T-cell (primary cell): ENCODE measurements at regions of chr1 and their contacts with region 1.

Region 1: GRCh38 chr1:206912445-206913095 is 9.2 kb downstream of the FCMR start:
- DNase-seq: peak in 33 of 35 experiments; percentile 21 to 86 (median 50)
- ATAC-seq: peak; percentile 31 to 35 (median 34)
- H3K4me3 ChIP-seq: no peak overlapping the region
- H3K4me3 Mint-ChIP-seq: peak overlapping the region in 1 of 3 donors; percentile 48
- H3K27ac ChIP-seq: peak overlapping the region; percentile 29
- H3K27ac Mint-ChIP-seq: peak overlapping the region in 1 of 2 donors; percentile 95
- H3K4me1 ChIP-seq: peaks cover 71 to 93% of the 10 kb centered on the region in 2 experiments
- H3K4me1 Mint-ChIP-seq: peaks cover 93 to 94% (median 93%) of the 10 kb centered on the region in 3 donors
- H3K27me3 ChIP-seq: no peaks in the 10 kb centered on the region
- H3K27me3 Mint-ChIP-seq: no peaks in the 10 kb centered on the region

Region 2: GRCh38 chr1:206143537-206144172 is 768.9 kb before region 1 on chr1:
- CTCF ChIA-PET with region 1: no interaction called
- POLR2A ChIA-PET with region 1: no interaction called
- DNase-seq: no peak
- ATAC-seq: no peak
- H3K4me3 ChIP-seq: no peak overlapping the region
- H3K4me3 Mint-ChIP-seq: no peak overlapping the region
- H3K27ac ChIP-seq: no peak overlapping the region
- H3K27ac Mint-ChIP-seq: no peak overlapping the region
- H3K4me1 ChIP-seq: peaks cover 0 to 5% of the 10 kb centered on the region in 2 experiments
- H3K4me1 Mint-ChIP-seq: peaks cover 0 to 4% (median 0%) of the 10 kb centered on the region in 3 donors
- H3K27me3 ChIP-seq: peaks cover 0 to 11% of the 10 kb centered on the region in 2 experiments
- H3K27me3 Mint-ChIP-seq: peaks cover 16 to 35% of the 10 kb centered on the region in 2 donors

Region 3: DNA sequence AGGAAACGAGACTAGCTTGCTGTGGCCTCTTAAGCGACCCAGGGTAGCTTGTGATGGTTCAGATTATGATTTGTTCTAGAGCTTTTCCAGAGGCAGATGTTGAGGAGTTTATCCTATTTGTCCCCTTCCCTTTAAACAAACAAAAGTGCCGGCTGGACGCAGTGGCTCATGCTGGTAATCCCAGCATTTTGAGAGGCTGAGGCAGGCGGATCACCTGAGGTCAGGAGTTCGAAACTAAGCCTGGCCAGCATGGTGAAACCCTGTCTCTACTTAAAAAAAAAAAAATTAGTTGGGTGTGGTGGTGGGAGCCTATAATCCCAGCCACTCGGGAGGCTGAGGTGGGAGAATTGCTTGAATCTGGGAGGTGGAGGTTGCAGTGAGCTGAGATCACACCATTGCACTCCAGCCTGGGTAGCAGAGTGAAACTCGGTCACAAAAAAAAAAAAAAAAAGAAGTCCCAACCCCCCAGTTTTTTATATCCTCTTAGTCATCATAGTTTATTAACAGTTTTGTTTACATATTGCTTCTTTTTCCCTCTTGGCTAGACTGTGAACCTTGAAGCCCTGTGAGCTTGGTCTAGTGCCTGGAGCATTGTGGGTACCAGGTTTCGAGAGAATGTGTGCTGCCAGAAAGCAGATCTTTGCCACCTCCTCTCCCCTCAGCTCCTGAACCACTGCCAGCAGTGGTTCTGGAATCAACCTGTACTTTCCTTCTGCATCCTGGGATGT is 198.1 kb before region 1 on chr1:
- CTCF ChIA-PET with region 1: interaction called in 1 of 2 experiments, 12 read pairs
- POLR2A ChIA-PET with region 1: no interaction called
- DNase-seq: peak in 11 of 35 experiments; percentile 14 to 68 (median 30)
- ATAC-seq: peak in 3 of 4 experiments; percentile 29 to 35 (median 31)
- H3K4me3 ChIP-seq: no peak overlapping the region
- H3K4me3 Mint-ChIP-seq: peak overlapping the region; percentile 22 to 71 (median 22)
- H3K27ac ChIP-seq: peak overlapping the region; percentile 71
- H3K27ac Mint-ChIP-seq: peak overlapping the region; percentile 86 to 98
- H3K4me1 ChIP-seq: peaks cover 36 to 66% of the 10 kb centered on the region in 2 experiments
- H3K4me1 Mint-ChIP-seq: peaks cover 83 to 87% (median 85%) of the 10 kb centered on the region in 3 donors
- H3K27me3 ChIP-seq: no peaks in the 10 kb centered on the region
- H3K27me3 Mint-ChIP-seq: no peaks in the 10 kb centered on the region

Region 4: DNA sequence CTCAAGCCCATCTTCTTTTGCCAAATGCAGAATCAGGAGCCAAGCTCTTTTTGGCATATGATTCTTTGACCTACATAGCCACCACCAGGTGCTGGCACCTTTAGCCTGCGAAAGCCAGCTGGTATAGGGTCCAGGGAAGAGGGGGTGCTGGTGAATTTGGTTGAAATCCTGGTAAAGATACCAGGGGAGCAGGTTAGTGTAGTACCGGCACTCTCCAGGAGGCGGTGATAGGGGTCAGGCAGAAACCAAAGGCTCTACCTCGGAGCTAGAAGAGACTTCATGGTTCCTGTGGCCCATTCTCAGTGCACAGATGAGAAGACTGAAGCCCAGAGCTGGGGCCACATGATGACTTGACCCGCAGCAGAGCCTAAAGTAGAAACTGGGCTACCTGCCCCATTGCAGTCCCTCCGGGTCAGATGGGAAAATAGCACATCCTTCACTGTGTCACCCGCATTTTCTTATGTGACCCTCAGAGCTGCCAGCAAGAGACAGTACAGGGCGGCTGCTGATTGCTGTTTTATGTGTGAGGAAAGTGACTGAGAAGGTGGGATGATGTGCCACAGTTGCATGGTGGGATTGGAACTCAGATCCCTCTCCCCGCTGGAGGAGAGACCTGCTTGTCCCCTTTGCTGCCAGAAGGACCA is 177.9 kb before region 1 on chr1:
- CTCF ChIA-PET with region 1: interaction called, 20 to 81 read pairs
- POLR2A ChIA-PET with region 1: interaction called in 1 of 2 experiments, 5 read pairs
- DNase-seq: peak; percentile 46 to 89 (median 75)
- ATAC-seq: peak; percentile 60 to 78 (median 69)
- H3K4me3 ChIP-seq: no peak overlapping the region
- H3K4me3 Mint-ChIP-seq: peak overlapping the region in 1 of 3 donors; percentile 21
- H3K27ac ChIP-seq: peak overlapping the region; percentile 89
- H3K27ac Mint-ChIP-seq: peak overlapping the region; percentile 66 to 91
- H3K4me1 ChIP-seq: peaks cover 41 to 56% of the 10 kb centered on the region in 2 experiments
- H3K4me1 Mint-ChIP-seq: peaks cover 56 to 62% (median 57%) of the 10 kb centered on the region in 3 donors
- H3K27me3 ChIP-seq: no peaks in the 10 kb centered on the region
- H3K27me3 Mint-ChIP-seq: no peaks in the 10 kb centered on the region

Region 5: DNA sequence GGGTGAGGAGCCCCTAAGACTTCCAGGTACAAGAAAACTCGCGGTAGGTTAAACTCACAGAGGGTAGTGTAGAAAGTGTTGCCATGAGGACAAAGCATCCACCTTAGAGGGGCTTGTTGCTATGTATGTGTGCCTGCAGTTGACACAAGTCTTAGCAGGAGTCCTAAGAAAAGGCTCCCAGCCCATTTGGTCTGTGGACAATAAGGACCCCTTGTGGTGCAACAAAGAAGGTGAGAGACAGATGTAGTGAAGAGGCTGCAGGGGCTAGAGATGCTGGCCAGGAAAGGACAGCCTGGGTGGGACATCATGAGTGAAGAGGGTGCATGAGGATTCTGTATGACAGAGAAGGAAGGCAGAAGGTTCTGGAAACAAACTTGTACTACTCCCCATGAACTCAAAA is 104.0 kb before region 1 on chr1:
- CTCF ChIA-PET with region 1: interaction called, 9 to 26 read pairs
- POLR2A ChIA-PET with region 1: no interaction called
- DNase-seq: peak in 30 of 35 experiments; percentile 14 to 82 (median 46)
- ATAC-seq: peak; percentile 78 to 84 (median 82)
- H3K4me3 ChIP-seq: no peak overlapping the region
- H3K4me3 Mint-ChIP-seq: peak overlapping the region in 1 of 3 donors; percentile 18
- H3K27ac ChIP-seq: no peak overlapping the region
- H3K27ac Mint-ChIP-seq: no peak overlapping the region
- H3K4me1 ChIP-seq: peaks cover 10 to 23% of the 10 kb centered on the region in 2 experiments
- H3K4me1 Mint-ChIP-seq: peaks cover 37 to 56% (median 53%) of the 10 kb centered on the region in 3 donors
- H3K27me3 ChIP-seq: no peaks in the 10 kb centered on the region
- H3K27me3 Mint-ChIP-seq: peaks cover 0 to 1% of the 10 kb centered on the region in 2 donors

Region 6: GRCh38 chr1:206865013-206865671 is 47.4 kb before region 1 on chr1 and contains the start of gene IL20:
- CTCF ChIA-PET with region 1: interaction called, 9 to 16 read pairs
- POLR2A ChIA-PET with region 1: interaction called in 1 of 2 experiments, 3 read pairs
- DNase-seq: peak; percentile 65 to 91 (median 83)
- ATAC-seq: peak; percentile 81 to 92 (median 89)
- H3K4me3 ChIP-seq: no peak within 1 kb of the TSS
- H3K4me3 Mint-ChIP-seq: no peak within 1 kb of the TSS
- H3K27ac ChIP-seq: no peak within 1 kb of the TSS
- H3K27ac Mint-ChIP-seq: no peak within 1 kb of the TSS
- H3K4me1 ChIP-seq: peaks cover 0 to 5% of the 10 kb centered on the region in 2 experiments
- H3K4me1 Mint-ChIP-seq: peaks cover 8 to 12% (median 11%) of the 10 kb centered on the region in 3 donors
- H3K27me3 ChIP-seq: peaks cover 0 to 2% of the 10 kb centered on the region in 2 experiments
- H3K27me3 Mint-ChIP-seq: peaks cover 4 to 12% of the 10 kb centered on the region in 2 donors
- total RNA-seq, gene IL20: not detected

Region 7: GRCh38 chr1:206930210-206930798 is 17.7 kb after region 1 on chr1:
- CTCF ChIA-PET with region 1: interaction called, 27 to 33 read pairs
- POLR2A ChIA-PET with region 1: no interaction called
- DNase-seq: peak in 4 of 35 experiments; percentile 22 to 38 (median 26)
- ATAC-seq: peak; percentile 17 to 50 (median 28)
- H3K4me3 ChIP-seq: no peak overlapping the region
- H3K4me3 Mint-ChIP-seq: peak overlapping the region; percentile 9 to 65 (median 24)
- H3K27ac ChIP-seq: peak overlapping the region; percentile 65
- H3K27ac Mint-ChIP-seq: peak overlapping the region; percentile 81 to 93
- H3K4me1 ChIP-seq: peaks cover 8 to 52% of the 10 kb centered on the region in 2 experiments
- H3K4me1 Mint-ChIP-seq: peaks cover 54 to 62% (median 61%) of the 10 kb centered on the region in 3 donors
- H3K27me3 ChIP-seq: no peaks in the 10 kb centered on the region
- H3K27me3 Mint-ChIP-seq: no peaks in the 10 kb centered on the region

Region 8: DNA sequence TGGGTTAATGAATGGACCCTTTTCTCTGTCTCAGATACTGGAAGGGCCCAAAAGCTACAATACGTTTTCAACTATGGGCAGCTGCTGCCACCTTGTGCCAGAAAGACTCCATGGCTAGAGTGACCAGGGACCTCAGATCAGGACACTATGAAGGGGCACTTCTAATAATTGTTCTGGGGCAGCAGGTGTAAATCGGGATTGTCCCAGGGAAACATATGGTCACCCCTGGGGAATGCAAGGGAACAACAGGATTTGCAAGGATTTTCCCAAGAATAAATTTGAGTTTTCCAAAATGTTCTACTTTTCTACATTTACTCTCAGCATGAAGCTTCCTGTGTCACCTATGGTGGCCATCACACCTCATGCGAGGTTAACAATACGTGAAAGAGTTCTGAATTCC is 69.6 kb after region 1 on chr1:
- CTCF ChIA-PET with region 1: interaction called, 3 to 16 read pairs
- POLR2A ChIA-PET with region 1: no interaction called
- DNase-seq: peak; percentile 16 to 75 (median 53)
- ATAC-seq: peak; percentile 71 to 85 (median 80)
- H3K4me3 ChIP-seq: no peak overlapping the region
- H3K4me3 Mint-ChIP-seq: no peak overlapping the region
- H3K27ac ChIP-seq: no peak overlapping the region
- H3K27ac Mint-ChIP-seq: no peak overlapping the region
- H3K4me1 ChIP-seq: no peaks in the 10 kb centered on the region
- H3K4me1 Mint-ChIP-seq: no peaks in the 10 kb centered on the region
- H3K27me3 ChIP-seq: peaks cover 0 to 10% of the 10 kb centered on the region in 2 experiments
- H3K27me3 Mint-ChIP-seq: peaks cover 12 to 29% of the 10 kb centered on the region in 2 donors

Region 9: GRCh38 chr1:207001492-207002245 is 89.1 kb after region 1 on chr1:
- CTCF ChIA-PET with region 1: no interaction called
- POLR2A ChIA-PET with region 1: no interaction called
- DNase-seq: no peak
- ATAC-seq: no peak
- H3K4me3 ChIP-seq: no peak overlapping the region
- H3K4me3 Mint-ChIP-seq: no peak overlapping the region
- H3K27ac ChIP-seq: no peak overlapping the region
- H3K27ac Mint-ChIP-seq: no peak overlapping the region
- H3K4me1 ChIP-seq: no peaks in the 10 kb centered on the region
- H3K4me1 Mint-ChIP-seq: peaks cover 1 to 6% (median 2%) of the 10 kb centered on the region in 3 donors
- H3K27me3 ChIP-seq: no peaks in the 10 kb centered on the region
- H3K27me3 Mint-ChIP-seq: peaks cover 8 to 13% of the 10 kb centered on the region in 2 donors